ENCODE measurements at regions of chr2 and their contacts with region 1.

Region 1: GRCh38 chr2:222903234-222904220 is 42.7 kb downstream of the ACSL3 start:
- DNase-seq: peak; percentile 49
- H3K4me3 ChIP-seq: no peak overlapping the region
- H3K27ac ChIP-seq: no peak overlapping the region
- H3K4me1 ChIP-seq: no peaks in the 10 kb centered on the region
- H3K27me3 ChIP-seq: no peaks in the 10 kb centered on the region
- CTCF ChIP-seq: peak; percentile 64

Region 2: GRCh38 chr2:222707689-222708525 is 195.6 kb before region 1 on chr2:
- intact Hi-C with region 1: loop called (anchors 2 kb)
- DNase-seq: peak; percentile 87
- H3K4me3 ChIP-seq: no peak overlapping the region
- H3K27ac ChIP-seq: no peak overlapping the region
- H3K4me1 ChIP-seq: peaks cover 4% of the 10 kb centered on the region
- H3K27me3 ChIP-seq: no peaks in the 10 kb centered on the region
- CTCF ChIP-seq: peak; percentile 92

Region 3: GRCh38 chr2:222797261-222797660 is 106.3 kb before region 1 on chr2:
- intact Hi-C with region 1: loop called (anchors 10 kb)
- DNase-seq: no peak
- H3K4me3 ChIP-seq: no peak overlapping the region
- H3K27ac ChIP-seq: peak overlapping the region; percentile 74
- H3K4me1 ChIP-seq: peaks cover 12% of the 10 kb centered on the region
- H3K27me3 ChIP-seq: no peaks in the 10 kb centered on the region
- CTCF ChIP-seq: no peak

Region 4: GRCh38 chr2:222866358-222866960 is 37.1 kb before region 1 on chr2:
- intact Hi-C with region 1: loop called (anchors 5 kb)
- DNase-seq: peak; percentile 31
- H3K4me3 ChIP-seq: no peak overlapping the region
- H3K27ac ChIP-seq: no peak overlapping the region
- H3K4me1 ChIP-seq: peaks cover 5% of the 10 kb centered on the region
- H3K27me3 ChIP-seq: no peaks in the 10 kb centered on the region
- CTCF ChIP-seq: no peak

Region 5: DNA sequence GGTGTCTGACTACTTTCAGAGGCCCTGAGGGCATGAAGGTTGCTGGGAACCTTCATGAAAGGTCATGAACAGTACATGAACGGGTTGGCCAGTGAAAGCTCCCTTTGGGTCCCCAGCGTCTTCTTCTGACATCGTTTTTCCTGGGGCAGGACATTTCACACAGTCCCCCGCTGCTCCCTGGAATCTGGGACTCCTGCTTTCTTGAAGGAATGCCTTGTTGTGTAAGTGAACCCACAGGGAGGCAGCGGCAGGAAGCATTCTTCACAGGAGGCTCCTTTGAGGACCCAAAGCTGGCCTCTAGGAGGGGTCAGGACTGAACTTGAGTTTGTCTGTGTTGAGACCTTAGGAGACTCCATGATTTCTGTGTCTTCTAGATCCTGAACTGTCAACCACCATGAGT is 292.8 kb after region 1 on chr2:
- intact Hi-C with region 1: no loop called
- DNase-seq: no peak
- H3K4me3 ChIP-seq: no peak overlapping the region
- H3K27ac ChIP-seq: no peak overlapping the region
- H3K4me1 ChIP-seq: no peaks in the 10 kb centered on the region
- H3K27me3 ChIP-seq: no peaks in the 10 kb centered on the region
- CTCF ChIP-seq: no peak